MCF 10A (cell line): ENCODE measurements at regions of chr19 and their contacts with region 1.

Region 1: GRCh38 chr19:46346821-46347571 is at the start of gene PPP5C:
- DNase-seq: peak; percentile 91
- H3K4me3 Mint-ChIP-seq: peak within 1 kb of the TSS; percentile 100
- H3K27ac Mint-ChIP-seq: peak within 1 kb of the TSS; percentile 92
- H3K4me1 Mint-ChIP-seq: peaks cover 42% of the 10 kb centered on the region
- H3K27me3 Mint-ChIP-seq: no peaks in the 10 kb centered on the region
- CTCF ChIP-seq: peak; percentile 73
- total RNA-seq, gene PPP5C: 75.6 and 81.5 TPM in 2 replicates

Region 2: DNA sequence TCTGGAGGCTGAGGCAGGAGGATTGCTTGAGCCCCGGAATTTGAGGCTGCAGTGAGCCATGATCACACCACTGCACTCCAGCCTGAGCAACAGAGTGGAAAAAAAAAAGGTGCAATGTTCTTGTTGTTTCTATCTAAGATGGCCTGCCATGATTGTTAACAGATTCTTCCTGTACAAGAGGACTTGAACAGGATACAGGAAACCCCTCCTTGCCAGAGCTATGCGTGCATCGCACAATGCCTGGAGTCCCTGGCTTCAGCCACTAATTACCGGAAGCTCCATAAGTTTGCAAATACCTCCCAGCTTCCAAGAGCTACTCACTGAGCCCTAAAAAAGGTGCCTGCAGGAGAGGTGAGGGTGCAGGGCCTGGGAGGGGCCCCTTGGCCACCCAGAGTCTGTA is 63.2 kb before region 1 on chr19:
- CTCF ChIA-PET with region 1: interaction called, 23 read pairs
- POLR2A ChIA-PET with region 1: interaction called, 15 read pairs
- intact Hi-C with region 1: loop called (anchors 2 kb)
- DNase-seq: no peak
- H3K4me3 Mint-ChIP-seq: no peak overlapping the region
- H3K27ac Mint-ChIP-seq: no peak overlapping the region
- H3K4me1 Mint-ChIP-seq: peaks cover 4% of the 10 kb centered on the region
- H3K27me3 Mint-ChIP-seq: no peaks in the 10 kb centered on the region
- CTCF ChIP-seq: no peak

Region 3: DNA sequence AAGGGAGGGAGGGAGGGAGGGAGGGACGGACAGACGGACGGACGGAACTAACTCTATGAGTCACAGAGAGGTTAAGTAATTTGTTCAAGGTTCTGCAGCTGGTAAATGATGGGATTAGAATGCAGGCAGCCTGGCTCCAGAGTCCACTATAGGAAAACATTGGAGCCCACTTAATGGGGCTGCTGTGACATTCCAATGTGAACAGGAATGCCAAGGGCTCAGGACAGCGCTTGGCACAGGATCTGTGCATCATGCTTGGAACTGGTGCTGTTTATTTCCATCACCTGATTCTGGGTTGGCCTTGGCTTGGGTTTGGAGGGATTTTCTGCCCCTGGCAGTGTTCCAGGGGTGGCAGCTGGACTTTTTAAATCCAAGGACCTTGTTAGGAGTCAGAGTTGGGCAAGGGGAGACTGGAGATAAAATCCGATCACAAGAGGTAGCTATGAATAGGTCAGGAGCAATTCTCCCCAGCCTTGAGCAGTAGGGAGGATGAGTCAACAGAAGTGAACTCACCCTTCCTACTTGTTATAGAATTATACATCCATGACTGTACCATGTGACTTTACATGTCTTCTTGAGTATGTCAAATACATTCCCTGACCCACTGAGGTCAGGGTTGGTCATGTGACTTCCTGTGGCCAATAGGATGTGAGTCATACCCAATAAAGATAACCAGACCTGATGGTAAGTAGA is 58.0 kb before region 1 on chr19:
- CTCF ChIA-PET with region 1: interaction called, 5 read pairs
- POLR2A ChIA-PET with region 1: interaction called, 15 read pairs
- intact Hi-C with region 1: no loop called
- DNase-seq: peak; percentile 92
- H3K4me3 Mint-ChIP-seq: peak overlapping the region; percentile 48
- H3K27ac Mint-ChIP-seq: peak overlapping the region; percentile 88
- H3K4me1 Mint-ChIP-seq: peaks cover 17% of the 10 kb centered on the region
- H3K27me3 Mint-ChIP-seq: no peaks in the 10 kb centered on the region
- CTCF ChIP-seq: no peak

Region 4: DNA sequence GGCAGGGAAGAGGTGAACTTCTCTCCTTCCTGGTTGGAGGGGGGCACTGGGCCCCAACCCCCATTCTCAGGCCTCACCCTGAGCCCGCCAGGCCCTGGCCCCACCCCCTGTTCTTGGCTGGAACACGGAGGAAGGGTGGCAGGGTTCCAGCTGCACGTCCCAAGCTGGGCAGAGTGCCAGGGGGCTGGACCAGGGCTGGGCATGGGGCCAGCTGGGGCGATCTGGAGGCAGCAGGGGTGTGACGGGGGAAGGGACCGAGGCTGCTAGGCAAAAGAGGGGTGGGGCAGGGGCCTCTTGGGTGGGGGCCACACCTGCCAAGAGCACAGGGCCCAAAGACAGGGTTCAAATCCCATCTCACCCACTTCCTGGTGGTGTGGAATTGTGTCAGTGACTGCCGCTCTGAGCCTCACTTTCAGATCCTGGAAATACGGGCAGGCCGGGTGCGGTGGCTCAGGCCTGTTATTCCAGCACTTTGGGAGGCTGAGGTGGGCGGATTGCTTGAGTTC is 47.9 kb before region 1 on chr19:
- CTCF ChIA-PET with region 1: interaction called, 9 read pairs
- POLR2A ChIA-PET with region 1: interaction called, 33 read pairs
- intact Hi-C with region 1: no loop called
- DNase-seq: peak; percentile 96
- H3K4me3 Mint-ChIP-seq: peak overlapping the region; percentile 29
- H3K27ac Mint-ChIP-seq: peak overlapping the region; percentile 79
- H3K4me1 Mint-ChIP-seq: peaks cover 25% of the 10 kb centered on the region
- H3K27me3 Mint-ChIP-seq: no peaks in the 10 kb centered on the region
- CTCF ChIP-seq: no peak

Region 5: DNA sequence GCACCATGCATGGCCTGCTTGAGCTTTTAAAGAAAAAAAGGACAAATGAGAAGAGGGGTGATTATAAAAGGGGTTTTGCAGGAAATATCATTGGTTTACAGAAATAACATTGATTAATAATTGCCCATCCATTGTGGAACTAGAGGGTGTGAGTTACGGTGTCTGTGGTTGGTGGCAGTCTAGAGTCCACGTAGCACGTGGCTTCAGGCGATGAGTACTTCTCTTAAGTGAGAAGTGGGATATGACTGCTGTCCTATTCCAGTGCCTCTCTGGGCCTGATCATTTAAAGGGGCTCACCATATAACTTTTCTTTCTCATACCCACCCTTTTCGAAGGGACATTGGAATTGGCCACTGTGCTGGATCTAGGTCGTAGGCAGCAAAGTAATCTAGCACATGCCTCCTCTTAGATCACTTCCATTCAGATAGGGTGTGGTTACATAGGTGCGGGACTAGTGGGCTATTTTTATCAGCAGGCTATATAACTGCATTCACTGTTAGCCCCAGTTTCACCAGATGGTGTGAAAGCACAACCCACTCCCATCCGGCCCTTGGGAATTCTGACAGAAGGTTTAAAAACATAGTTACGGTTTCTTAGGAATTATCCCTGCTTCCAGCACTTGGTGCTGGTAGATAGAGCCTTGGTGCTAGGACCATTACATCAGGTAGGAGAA is 19.8 kb after region 1 on chr19:
- CTCF ChIA-PET with region 1: interaction called, 12 read pairs
- POLR2A ChIA-PET with region 1: interaction called, 9 read pairs
- intact Hi-C with region 1: loop called (anchors 2 kb)
- DNase-seq: no peak
- H3K4me3 Mint-ChIP-seq: no peak overlapping the region
- H3K27ac Mint-ChIP-seq: peak overlapping the region; percentile 46
- H3K4me1 Mint-ChIP-seq: peaks cover 9% of the 10 kb centered on the region
- H3K27me3 Mint-ChIP-seq: no peaks in the 10 kb centered on the region
- CTCF ChIP-seq: no peak